Gastrocnemius medialis (tissue), 4 donors: ENCODE measurements at regions of chr15 and their contacts with region 1.

Region 1: GRCh38 chr15:71730277-71731144 is 79.8 kb upstream of the NR2E3 start:
- DNase-seq: no peak
- ATAC-seq: peak; percentile 81 to 82
- H3K4me3 ChIP-seq: no peak overlapping the region
- H3K27ac ChIP-seq: no peak overlapping the region
- H3K4me1 ChIP-seq: peaks cover 0 to 3% of the 10 kb centered on the region in 2 donors
- H3K27me3 ChIP-seq: no peaks in the 10 kb centered on the region
- CTCF ChIP-seq: peak; percentile 51 to 85 (median 73)
- POLR2A ChIP-seq: no peak

Region 2: GRCh38 chr15:71455107-71455506 is 275.4 kb before region 1 on chr15:
- in situ Hi-C with region 1: loop called in 1 of 4 experiments (anchors 10 kb)
- intact Hi-C with region 1: no loop called
- DNase-seq: peak; percentile 26 to 32
- ATAC-seq: peak; percentile 76 to 80
- H3K4me3 ChIP-seq: no peak overlapping the region
- H3K27ac ChIP-seq: peak overlapping the region in 2 of 4 donors; percentile 32 to 82
- H3K4me1 ChIP-seq: peaks cover 32 to 40% of the 10 kb centered on the region in 2 donors
- H3K27me3 ChIP-seq: no peaks in the 10 kb centered on the region
- CTCF ChIP-seq: no peak
- POLR2A ChIP-seq: no peak

Region 3: GRCh38 chr15:71532994-71533393 is 197.5 kb before region 1 on chr15:
- in situ Hi-C with region 1: no loop called
- intact Hi-C with region 1: loop called (anchors 1 kb)
- DNase-seq: no peak
- ATAC-seq: no peak
- H3K4me3 ChIP-seq: no peak overlapping the region
- H3K27ac ChIP-seq: no peak overlapping the region
- H3K4me1 ChIP-seq: no peaks in the 10 kb centered on the region
- H3K27me3 ChIP-seq: no peaks in the 10 kb centered on the region
- CTCF ChIP-seq: peak; percentile 17 to 57 (median 46)
- POLR2A ChIP-seq: no peak

Region 4: DNA sequence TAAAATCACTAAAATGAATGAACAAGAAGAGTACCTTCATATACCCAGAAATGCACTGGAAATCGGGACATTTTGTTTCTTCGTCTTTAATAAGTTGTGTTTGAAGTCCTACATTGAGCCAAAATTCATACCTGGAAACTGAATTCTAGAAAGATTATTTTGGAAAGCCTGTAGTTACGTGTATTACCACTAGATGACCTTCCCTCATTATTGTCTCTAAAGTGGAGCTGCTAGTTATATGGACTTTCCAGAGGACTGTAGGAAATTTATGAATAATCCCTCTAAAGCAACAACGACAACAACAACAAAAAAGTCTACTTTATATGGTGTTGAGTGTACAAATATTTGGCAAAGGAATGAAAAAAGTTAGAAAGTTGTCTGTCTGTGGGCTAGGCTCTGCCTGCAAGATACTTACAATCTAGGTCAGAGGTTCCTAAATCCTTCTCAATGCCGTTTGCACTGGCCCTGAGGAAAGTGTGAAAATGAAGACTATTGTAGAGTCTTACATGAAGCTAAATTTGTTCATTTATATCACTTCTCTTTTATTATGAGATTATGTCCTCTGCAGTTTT is 155.0 kb before region 1 on chr15:
- in situ Hi-C with region 1: loop called in 1 of 4 experiments (anchors 10 kb)
- intact Hi-C with region 1: loop called (anchors 1 kb)
- DNase-seq: no peak
- ATAC-seq: no peak
- H3K4me3 ChIP-seq: no peak overlapping the region
- H3K27ac ChIP-seq: no peak overlapping the region
- H3K4me1 ChIP-seq: peaks cover 14% of the 10 kb centered on the region in 2 donors
- H3K27me3 ChIP-seq: no peaks in the 10 kb centered on the region
- CTCF ChIP-seq: peak; percentile 27 to 46 (median 39)
- POLR2A ChIP-seq: no peak

Region 5: GRCh38 chr15:71752604-71753289 is 22.2 kb after region 1 on chr15:
- in situ Hi-C with region 1: no loop called
- intact Hi-C with region 1: no loop called
- DNase-seq: no peak
- ATAC-seq: peak; percentile 58 to 75
- H3K4me3 ChIP-seq: no peak overlapping the region
- H3K27ac ChIP-seq: no peak overlapping the region
- H3K4me1 ChIP-seq: peaks cover 7 to 13% of the 10 kb centered on the region in 2 donors
- H3K27me3 ChIP-seq: no peaks in the 10 kb centered on the region
- CTCF ChIP-seq: peak in 2 of 5 experiments; percentile 27 to 34
- POLR2A ChIP-seq: no peak

Region 6: GRCh38 chr15:71780115-71780976 is 49.8 kb after region 1 on chr15:
- in situ Hi-C with region 1: no loop called
- intact Hi-C with region 1: no loop called
- DNase-seq: no peak
- ATAC-seq: no peak
- H3K4me3 ChIP-seq: peak overlapping the region in 1 of 4 donors; percentile 22
- H3K27ac ChIP-seq: no peak overlapping the region
- H3K4me1 ChIP-seq: peaks cover 7 to 9% of the 10 kb centered on the region in 2 donors
- H3K27me3 ChIP-seq: no peaks in the 10 kb centered on the region
- CTCF ChIP-seq: peak in 4 of 5 experiments; percentile 18 to 70 (median 46)
- POLR2A ChIP-seq: no peak

Region 7: DNA sequence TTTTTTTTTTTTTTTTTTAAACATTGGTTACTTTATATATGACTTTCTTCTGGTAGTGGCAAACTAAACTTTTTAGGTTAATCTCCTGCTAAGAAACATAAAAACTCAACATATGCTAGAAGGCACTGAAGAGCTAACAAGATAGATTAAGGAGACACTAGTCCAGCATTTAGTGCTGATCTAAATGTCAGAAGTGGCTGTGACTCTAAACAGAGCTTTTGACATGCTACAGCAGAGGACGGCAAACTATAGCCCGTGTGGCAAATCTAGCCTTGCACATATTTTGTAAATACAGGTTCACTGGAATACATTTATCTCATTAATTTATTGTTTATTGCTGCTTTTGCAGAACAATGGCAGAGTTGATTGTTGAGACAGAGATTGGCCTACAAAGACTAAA is 100.5 kb after region 1 on chr15:
- in situ Hi-C with region 1: no loop called
- intact Hi-C with region 1: no loop called
- DNase-seq: no peak
- ATAC-seq: no peak
- H3K4me3 ChIP-seq: no peak overlapping the region
- H3K27ac ChIP-seq: no peak overlapping the region
- H3K4me1 ChIP-seq: no peaks in the 10 kb centered on the region
- H3K27me3 ChIP-seq: no peaks in the 10 kb centered on the region
- CTCF ChIP-seq: no peak
- POLR2A ChIP-seq: no peak